ENCODE measurements at regions of chr4 and their contacts with region 1.

Region 1: DNA sequence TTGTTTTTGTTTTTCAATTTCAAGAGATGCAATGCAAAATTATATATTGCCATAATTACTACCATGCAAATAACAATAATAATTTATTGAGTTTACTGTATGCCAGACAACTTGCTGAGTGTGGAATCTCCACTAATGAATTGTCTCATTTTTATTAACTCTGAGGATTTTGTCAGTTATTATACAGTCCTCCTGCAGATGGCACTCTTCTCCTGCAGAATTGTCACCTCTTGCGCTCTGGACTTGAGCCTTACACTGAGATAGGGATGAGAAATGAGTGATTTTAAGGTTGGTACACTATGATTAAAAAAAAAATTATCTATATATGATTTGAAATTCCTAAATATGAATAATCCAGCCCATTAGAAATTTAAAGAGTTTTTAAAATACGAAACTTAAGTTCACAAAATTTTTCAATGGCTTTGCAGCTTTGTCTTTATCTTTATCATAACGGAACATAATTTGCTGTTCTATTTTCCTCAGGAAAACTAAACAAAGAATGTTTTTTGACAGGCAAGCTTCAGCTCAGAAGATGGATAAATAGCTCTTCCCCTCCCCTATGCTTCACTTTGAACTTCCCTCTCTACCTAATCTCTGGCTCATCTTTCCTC is 12.7 kb upstream of the PAQR3 start:
- DNase-seq: peak in 2 of 5 donors; percentile 62 to 75
- H3K4me3 ChIP-seq: no peak overlapping the region
- H3K27ac ChIP-seq: no peak overlapping the region
- H3K4me1 ChIP-seq: no peaks in the 10 kb centered on the region
- H3K27me3 ChIP-seq: no peaks in the 10 kb centered on the region
- CTCF ChIP-seq: peak; percentile 67

Region 2: GRCh38 chr4:78756776-78757175 is 195.2 kb before region 1 on chr4:
- intact Hi-C with region 1: no loop called
- DNase-seq: no peak
- H3K4me3 ChIP-seq: no peak overlapping the region
- H3K27ac ChIP-seq: no peak overlapping the region
- H3K4me1 ChIP-seq: no peaks in the 10 kb centered on the region
- H3K27me3 ChIP-seq: no peaks in the 10 kb centered on the region
- CTCF ChIP-seq: no peak

Region 3: DNA sequence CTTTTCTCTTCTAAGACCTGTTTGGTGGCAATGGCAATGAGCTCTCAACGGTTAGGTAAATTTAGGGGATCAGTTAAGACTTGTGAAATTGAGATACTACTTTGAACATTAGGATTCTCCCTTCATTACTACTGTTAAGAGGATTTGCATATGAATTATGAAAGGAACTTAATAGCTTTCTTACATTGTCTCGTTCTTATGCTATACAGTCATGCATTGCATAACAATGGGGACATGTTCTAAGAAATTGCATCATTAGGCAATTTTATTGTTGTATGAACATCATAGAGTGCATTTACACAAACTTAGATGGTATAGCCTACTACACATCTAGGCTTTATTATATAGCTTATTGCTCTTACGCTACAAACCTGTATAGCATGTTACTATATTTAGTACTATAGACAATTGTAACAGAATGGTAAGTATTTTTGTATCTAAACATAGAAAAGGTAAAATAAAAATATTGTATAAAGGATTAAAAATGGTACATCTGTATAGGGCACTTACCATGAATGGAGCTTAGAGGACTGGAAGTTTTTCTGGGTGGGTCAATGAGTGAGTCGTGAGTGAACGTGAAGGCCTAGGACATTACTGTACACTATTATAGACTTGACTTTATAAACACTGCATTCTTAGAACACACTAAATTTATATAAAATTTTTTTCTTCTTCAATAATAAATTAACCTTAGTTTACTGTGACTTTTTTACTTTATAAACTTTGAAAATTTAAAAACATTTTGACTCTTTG is 75.2 kb before region 1 on chr4:
- intact Hi-C with region 1: no loop called
- DNase-seq: no peak
- H3K4me3 ChIP-seq: no peak overlapping the region
- H3K27ac ChIP-seq: no peak overlapping the region
- H3K4me1 ChIP-seq: no peaks in the 10 kb centered on the region
- H3K27me3 ChIP-seq: no peaks in the 10 kb centered on the region
- CTCF ChIP-seq: no peak

Region 4: DNA sequence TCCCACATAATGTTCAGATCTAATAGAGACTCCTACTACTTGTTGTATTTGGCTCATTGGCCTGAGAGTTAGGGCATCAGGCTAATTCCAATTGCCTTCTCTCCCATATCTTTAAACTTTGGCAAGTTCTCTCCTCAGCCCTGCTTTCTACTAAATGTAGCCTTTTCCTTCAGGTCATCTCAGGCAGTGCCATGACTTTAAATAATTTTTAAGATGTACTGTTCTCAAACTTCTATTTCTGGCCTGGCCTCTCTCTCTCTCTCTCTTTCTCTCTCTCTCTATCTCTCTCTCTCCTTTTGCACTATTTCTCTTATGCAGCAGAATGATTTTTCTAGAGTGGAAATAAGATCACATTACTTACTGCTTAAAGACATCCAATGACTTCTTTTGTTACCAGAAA is 101.8 kb after region 1 on chr4:
- intact Hi-C with region 1: no loop called
- DNase-seq: no peak
- H3K4me3 ChIP-seq: no peak overlapping the region
- H3K27ac ChIP-seq: no peak overlapping the region
- H3K4me1 ChIP-seq: no peaks in the 10 kb centered on the region
- H3K27me3 ChIP-seq: no peaks in the 10 kb centered on the region
- CTCF ChIP-seq: no peak

Region 5: GRCh38 chr4:79227860-79228259 is 275.9 kb after region 1 on chr4:
- intact Hi-C with region 1: no loop called
- DNase-seq: peak in 1 of 5 donors; percentile 65
- H3K4me3 ChIP-seq: no peak overlapping the region
- H3K27ac ChIP-seq: no peak overlapping the region
- H3K4me1 ChIP-seq: no peaks in the 10 kb centered on the region
- H3K27me3 ChIP-seq: no peaks in the 10 kb centered on the region
- CTCF ChIP-seq: no peak

Region 6: GRCh38 chr4:80215449-80216052 is 1263.6 kb after region 1 on chr4:
- intact Hi-C with region 1: loop called (anchors 10 kb)
- DNase-seq: peak in 1 of 5 donors; percentile 70
- H3K4me3 ChIP-seq: no peak overlapping the region
- H3K27ac ChIP-seq: no peak overlapping the region
- H3K4me1 ChIP-seq: no peaks in the 10 kb centered on the region
- H3K27me3 ChIP-seq: peaks cover 13% of the 10 kb centered on the region
- CTCF ChIP-seq: peak; percentile 41

Measured in kidney (tissue), 22 donors.